ENCODE measurements at regions of chr2 and their contacts with region 1.

Region 1: GRCh38 chr2:156400706-156401678 is 35.2 kb upstream of the GPD2 start:
- DNase-seq: peak; percentile 77
- H3K4me3 ChIP-seq: peak overlapping the region; percentile 31 to 76 (median 63)
- H3K27ac ChIP-seq: peak overlapping the region; percentile 90 to 95 (median 92)
- H3K4me1 ChIP-seq: peaks cover 4 to 21% (median 13%) of the 10 kb centered on the region in 4 donors
- H3K27me3 ChIP-seq: no peaks in the 10 kb centered on the region
- CTCF ChIP-seq: no peak
- EP300 ChIP-seq: no peak
- POLR2A ChIP-seq: no peak

Region 2: GRCh38 chr2:156332534-156333273 is 68.3 kb before region 1 on chr2 and contains the start of gene NR4A2:
- in situ Hi-C with region 1: no loop called
- intact Hi-C with region 1: loop called (anchors 2 kb)
- DNase-seq: peak; percentile 95
- H3K4me3 ChIP-seq: peak within 1 kb of the TSS; percentile 67 to 95 (median 82)
- H3K27ac ChIP-seq: peak within 1 kb of the TSS; percentile 98 to 100 (median 98)
- H3K4me1 ChIP-seq: peaks cover 3 to 36% (median 19%) of the 10 kb centered on the region in 4 donors
- H3K27me3 ChIP-seq: peaks cover 8% of the 10 kb centered on the region
- CTCF ChIP-seq: no peak
- EP300 ChIP-seq: no peak
- POLR2A ChIP-seq: peak; percentile 89
- total RNA-seq, gene NR4A2: 2.9 to 7.4 (median 4.1) TPM

Region 3: GRCh38 chr2:156625360-156626170 is 224.6 kb after region 1 on chr2:
- in situ Hi-C with region 1: no loop called
- intact Hi-C with region 1: no loop called
- DNase-seq: no peak
- H3K4me3 ChIP-seq: no peak overlapping the region
- H3K27ac ChIP-seq: no peak overlapping the region
- H3K4me1 ChIP-seq: no peaks in the 10 kb centered on the region
- H3K27me3 ChIP-seq: no peaks in the 10 kb centered on the region
- CTCF ChIP-seq: no peak
- EP300 ChIP-seq: no peak
- POLR2A ChIP-seq: no peak

Region 4: GRCh38 chr2:156845806-156846558 is 445.0 kb after region 1 on chr2:
- in situ Hi-C with region 1: no loop called
- intact Hi-C with region 1: no loop called
- DNase-seq: no peak
- H3K4me3 ChIP-seq: no peak overlapping the region
- H3K27ac ChIP-seq: no peak overlapping the region
- H3K4me1 ChIP-seq: no peaks in the 10 kb centered on the region
- H3K27me3 ChIP-seq: no peaks in the 10 kb centered on the region
- CTCF ChIP-seq: no peak
- EP300 ChIP-seq: no peak
- POLR2A ChIP-seq: no peak

Region 5: GRCh38 chr2:156892467-156893281 is 491.7 kb after region 1 on chr2:
- in situ Hi-C with region 1: loop called in 1 of 4 experiments (anchors 25 kb)
- intact Hi-C with region 1: no loop called
- DNase-seq: no peak
- H3K4me3 ChIP-seq: peak overlapping the region in 3 of 4 donors; percentile 24 to 42 (median 25)
- H3K27ac ChIP-seq: peak overlapping the region in 1 of 4 donors; percentile 6
- H3K4me1 ChIP-seq: peaks cover 0 to 14% (median 3%) of the 10 kb centered on the region in 4 donors
- H3K27me3 ChIP-seq: no peaks in the 10 kb centered on the region
- CTCF ChIP-seq: peak; percentile 30 to 69 (median 46)
- EP300 ChIP-seq: no peak
- POLR2A ChIP-seq: no peak